Mammary epithelial cell (primary cell): ENCODE measurements at regions of chr1 and their contacts with region 1.

Region 1: DNA sequence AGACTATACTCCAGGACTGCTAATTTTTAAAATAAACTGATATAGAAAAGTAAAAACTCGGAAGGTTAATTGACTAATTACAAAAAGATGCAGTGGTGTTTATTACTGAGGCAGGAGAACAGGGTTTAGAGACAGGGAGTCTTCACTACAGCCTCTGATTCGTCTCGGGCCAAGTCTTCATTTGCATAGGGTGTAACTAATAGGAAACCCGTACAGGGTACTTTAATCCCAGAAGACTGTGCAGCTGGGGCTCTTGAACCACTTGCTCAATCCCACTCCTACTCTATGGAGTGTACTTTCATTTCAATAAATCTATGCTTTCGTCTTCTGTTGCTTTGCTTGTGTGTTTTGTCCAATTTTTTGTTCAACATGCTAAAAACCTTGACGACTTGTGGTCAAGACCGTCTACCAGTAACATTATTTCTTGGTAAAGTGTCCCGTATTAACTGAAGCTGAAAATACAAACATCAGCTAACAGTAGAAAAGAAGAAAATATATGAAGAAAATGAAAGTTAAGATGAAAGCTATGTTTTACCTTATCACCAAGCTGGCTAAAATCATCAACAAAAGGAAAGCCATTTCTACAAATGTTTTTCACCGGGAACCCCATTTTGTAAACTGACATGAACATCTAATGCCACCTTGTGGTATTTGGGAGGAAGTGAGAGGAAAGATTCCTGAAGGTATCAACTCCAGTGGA is 8.0 kb downstream of the SDHB start:
- DNase-seq: peak; percentile 39
- H3K4me3 ChIP-seq: no peak overlapping the region
- H3K27ac ChIP-seq: no peak overlapping the region
- H3K4me1 ChIP-seq: peaks cover 3% of the 10 kb centered on the region
- H3K27me3 ChIP-seq: no peaks in the 10 kb centered on the region
- CTCF ChIP-seq: peak; percentile 74 to 80

Region 2: GRCh38 chr1:16613185-16614147 is 432.3 kb before region 1 on chr1 and contains the start of gene NBPF1:
- CTCF ChIA-PET with region 1: no interaction called
- dilution Hi-C with region 1: no loop called
- in situ Hi-C with region 1: loop called in 1 of 2 experiments (anchors 25 kb)
- intact Hi-C with region 1: no loop called
- DNase-seq: peak; percentile 94
- H3K4me3 ChIP-seq: peak within 1 kb of the TSS; percentile 74 to 97 (median 78)
- H3K27ac ChIP-seq: peak within 1 kb of the TSS; percentile 30
- H3K4me1 ChIP-seq: peaks cover 16% of the 10 kb centered on the region
- H3K27me3 ChIP-seq: no peaks in the 10 kb centered on the region
- CTCF ChIP-seq: no peak
- total RNA-seq, gene NBPF1: 22.7 to 31.9 TPM

Region 3: GRCh38 chr1:16644193-16644481 is 401.6 kb before region 1 on chr1:
- CTCF ChIA-PET with region 1: no interaction called
- dilution Hi-C with region 1: no loop called
- in situ Hi-C with region 1: loop called in 1 of 2 experiments (anchors 25 kb)
- intact Hi-C with region 1: no loop called
- DNase-seq: peak; percentile 20
- H3K4me3 ChIP-seq: peak overlapping the region; percentile 73 to 83 (median 74)
- H3K27ac ChIP-seq: peak overlapping the region; percentile 53
- H3K4me1 ChIP-seq: peaks cover 15% of the 10 kb centered on the region
- H3K27me3 ChIP-seq: no peaks in the 10 kb centered on the region
- CTCF ChIP-seq: no peak

Region 4: DNA sequence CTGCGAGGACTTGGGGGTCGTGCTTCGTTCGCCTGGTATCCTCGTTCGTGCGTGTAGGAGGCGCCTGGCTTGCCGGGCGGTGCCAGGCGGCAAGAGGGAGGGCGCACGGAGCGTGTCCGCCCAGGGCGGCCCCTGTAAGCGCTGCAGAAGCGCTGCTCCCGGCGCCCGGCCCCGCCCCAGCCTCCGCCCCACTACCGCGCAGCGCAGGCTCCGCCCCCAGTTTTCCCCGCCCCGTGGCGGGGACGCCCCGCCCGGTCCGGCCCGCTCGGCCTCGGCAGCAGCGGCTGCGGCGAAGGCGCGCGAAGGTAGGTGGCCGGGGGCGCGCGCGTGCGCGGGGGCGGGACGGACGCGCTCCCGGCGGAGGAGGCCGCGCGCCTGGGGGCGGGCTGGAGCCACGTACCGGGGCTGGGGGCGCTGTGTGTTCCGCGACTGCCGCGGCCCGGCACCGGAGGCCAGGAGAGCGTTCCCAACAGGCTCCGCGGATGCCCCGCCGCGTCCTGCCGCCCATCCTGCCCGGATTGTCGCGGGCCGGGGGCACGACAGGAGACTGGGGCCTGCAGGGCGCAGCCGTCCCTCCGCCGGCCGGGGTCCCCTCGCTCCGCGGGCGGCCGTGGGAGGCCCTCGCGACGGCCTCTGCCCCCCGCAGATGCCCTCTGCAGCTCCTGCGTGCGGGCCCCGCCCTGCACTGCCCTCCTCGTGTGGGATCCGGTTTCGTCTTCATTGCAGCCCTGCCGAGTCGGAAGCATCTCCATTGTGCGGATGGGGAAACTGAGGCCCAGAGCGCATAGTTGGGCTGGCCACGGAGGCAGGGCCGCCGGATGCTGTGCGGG is 131.7 kb before region 1 on chr1:
- CTCF ChIA-PET with region 1: no interaction called
- dilution Hi-C with region 1: no loop called
- in situ Hi-C with region 1: no loop called
- intact Hi-C with region 1: loop called (anchors 1 kb)
- DNase-seq: peak; percentile 90
- H3K4me3 ChIP-seq: peak overlapping the region; percentile 28 to 78 (median 71)
- H3K27ac ChIP-seq: peak overlapping the region; percentile 22
- H3K4me1 ChIP-seq: peaks cover 9% of the 10 kb centered on the region
- H3K27me3 ChIP-seq: no peaks in the 10 kb centered on the region
- CTCF ChIP-seq: no peak

Region 5: GRCh38 chr1:16960560-16961296 is 85.1 kb before region 1 on chr1:
- CTCF ChIA-PET with region 1: no interaction called
- dilution Hi-C with region 1: no loop called
- in situ Hi-C with region 1: loop called (anchors 5 kb)
- intact Hi-C with region 1: loop called (anchors 1 kb)
- DNase-seq: no peak
- H3K4me3 ChIP-seq: no peak overlapping the region
- H3K27ac ChIP-seq: no peak overlapping the region
- H3K4me1 ChIP-seq: no peaks in the 10 kb centered on the region
- H3K27me3 ChIP-seq: no peaks in the 10 kb centered on the region
- CTCF ChIP-seq: no peak

Region 6: DNA sequence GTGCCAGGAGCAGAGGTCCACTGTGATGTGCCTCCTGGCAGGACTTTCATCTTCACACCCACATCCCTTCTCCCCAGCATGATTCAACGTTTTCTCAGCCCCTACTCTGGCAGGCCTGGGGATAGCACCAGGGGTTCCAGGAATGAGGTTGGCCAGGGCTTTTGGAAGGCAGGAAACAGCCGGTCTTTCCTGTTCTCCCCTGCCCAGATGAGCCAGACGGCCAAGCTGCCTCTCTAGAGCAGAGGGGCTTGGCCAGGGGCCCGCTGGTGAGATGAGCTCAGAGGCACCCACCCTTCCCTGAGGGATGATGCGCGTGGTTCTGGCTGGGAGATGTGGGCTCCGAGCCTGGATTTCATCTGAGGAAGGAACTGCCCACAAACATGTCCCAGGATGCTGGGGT is 61.1 kb before region 1 on chr1:
- CTCF ChIA-PET with region 1: no interaction called
- dilution Hi-C with region 1: no loop called
- in situ Hi-C with region 1: no loop called
- intact Hi-C with region 1: loop called (anchors 5 kb)
- DNase-seq: peak; percentile 92
- H3K4me3 ChIP-seq: no peak overlapping the region
- H3K27ac ChIP-seq: peak overlapping the region; percentile 26
- H3K4me1 ChIP-seq: peaks cover 46% of the 10 kb centered on the region
- H3K27me3 ChIP-seq: no peaks in the 10 kb centered on the region
- CTCF ChIP-seq: no peak

Region 7: DNA sequence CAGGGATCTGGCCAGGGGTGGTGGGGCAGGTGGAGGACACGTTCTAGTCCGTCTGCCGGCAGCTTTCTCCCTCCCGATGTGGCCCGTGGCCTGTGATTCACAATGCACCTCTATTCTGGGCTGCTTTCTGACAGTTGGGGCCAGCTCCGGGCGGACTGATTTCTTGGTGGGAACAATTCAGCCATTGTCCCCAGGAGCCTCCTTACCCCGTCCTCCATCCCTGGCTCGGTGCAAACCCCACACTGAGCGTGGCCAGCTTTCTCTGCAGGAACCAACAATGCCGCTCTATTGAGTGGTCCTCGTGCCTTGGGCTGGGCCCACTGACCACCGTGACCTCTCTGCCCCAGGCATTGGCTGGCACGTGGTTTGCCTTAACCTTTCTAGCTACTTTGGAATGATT is 43.7 kb after region 1 on chr1:
- CTCF ChIA-PET with region 1: no interaction called
- dilution Hi-C with region 1: no loop called
- in situ Hi-C with region 1: no loop called
- intact Hi-C with region 1: no loop called
- DNase-seq: no peak
- H3K4me3 ChIP-seq: no peak overlapping the region
- H3K27ac ChIP-seq: no peak overlapping the region
- H3K4me1 ChIP-seq: peaks cover 6% of the 10 kb centered on the region
- H3K27me3 ChIP-seq: no peaks in the 10 kb centered on the region
- CTCF ChIP-seq: no peak